Esophagus squamous epithelium (tissue), 5 donors: ENCODE measurements at regions of chr10 and their contacts with region 1.

Region 1: GRCh38 chr10:84147347-84147746 is 8.0 kb downstream of the GHITM start:
- DNase-seq: no peak
- H3K4me3 ChIP-seq: no peak overlapping the region
- H3K27ac ChIP-seq: no peak overlapping the region
- H3K4me1 ChIP-seq: peaks cover 0 to 8% (median 0%) of the 10 kb centered on the region in 3 donors
- H3K27me3 ChIP-seq: no peaks in the 10 kb centered on the region
- CTCF ChIP-seq: no peak
- POLR2A ChIP-seq: no peak

Region 2: GRCh38 chr10:84205049-84205852 is 57.9 kb after region 1 on chr10:
- intact Hi-C with region 1: loop called (anchors 5 kb)
- DNase-seq: no peak
- H3K4me3 ChIP-seq: no peak overlapping the region
- H3K27ac ChIP-seq: no peak overlapping the region
- H3K4me1 ChIP-seq: no peaks in the 10 kb centered on the region
- H3K27me3 ChIP-seq: no peaks in the 10 kb centered on the region
- CTCF ChIP-seq: peak; percentile 32 to 93 (median 76)
- POLR2A ChIP-seq: no peak

Region 3: DNA sequence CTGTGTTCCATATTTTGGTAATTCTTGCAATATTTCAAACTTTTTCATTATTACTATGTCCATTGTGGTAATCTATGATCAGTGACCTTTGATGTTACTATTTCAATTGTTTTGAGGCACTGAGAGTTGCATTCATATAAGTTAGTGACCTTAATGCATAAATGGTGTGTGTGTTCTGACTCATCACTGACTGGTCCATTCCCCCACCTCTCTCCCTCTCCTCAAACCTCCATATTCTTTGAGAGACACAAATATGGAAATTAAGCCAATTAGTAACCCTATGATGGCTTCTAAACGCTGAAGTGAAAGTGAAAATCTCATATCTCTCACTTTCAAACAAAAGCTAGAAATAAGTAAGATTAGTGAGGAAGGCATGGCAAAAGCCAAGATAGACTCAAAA is 920.6 kb after region 1 on chr10:
- intact Hi-C with region 1: no loop called
- DNase-seq: no peak
- H3K4me3 ChIP-seq: no peak overlapping the region
- H3K27ac ChIP-seq: no peak overlapping the region
- H3K4me1 ChIP-seq: no peaks in the 10 kb centered on the region
- H3K27me3 ChIP-seq: no peaks in the 10 kb centered on the region
- CTCF ChIP-seq: no peak
- POLR2A ChIP-seq: no peak